ENCODE measurements at regions of chr11 and their contacts with region 1.

Region 1: DNA sequence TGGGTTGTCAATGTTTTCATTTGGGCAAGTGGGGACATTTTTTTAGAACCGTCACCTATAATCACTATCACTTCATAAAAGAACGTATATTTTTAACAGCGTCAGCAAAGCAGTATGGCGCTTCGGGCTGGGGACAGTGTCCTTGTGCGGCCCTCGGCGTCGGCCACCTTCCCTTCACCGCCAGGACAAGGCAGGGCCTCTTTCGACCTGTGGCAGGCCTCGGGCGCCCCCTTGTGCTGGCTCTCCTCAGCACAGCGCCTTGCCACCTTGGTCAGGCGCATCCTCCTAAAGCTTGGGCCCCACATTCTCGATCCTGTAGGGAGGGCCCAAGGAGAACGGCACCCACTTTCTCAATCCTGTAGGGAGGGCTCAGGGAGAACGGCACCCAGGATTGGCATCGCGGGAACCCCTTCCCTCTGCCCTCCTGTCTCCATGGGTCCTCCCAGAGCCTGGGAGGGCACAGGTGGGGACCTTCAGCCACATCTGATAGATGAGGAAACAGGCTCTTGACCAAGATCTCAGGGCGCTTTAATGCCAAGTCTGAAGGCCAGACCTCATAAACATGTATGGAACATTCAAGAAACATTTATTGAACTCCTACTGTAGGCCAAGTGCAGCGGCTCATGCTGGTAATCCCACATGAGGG is 11.5 kb upstream of the FADD start:
- DNase-seq: peak; percentile 79
- H3K4me3 ChIP-seq: no peak overlapping the region
- H3K27ac ChIP-seq: no peak overlapping the region
- H3K4me1 ChIP-seq: no peaks in the 10 kb centered on the region
- H3K27me3 ChIP-seq: no peaks in the 10 kb centered on the region
- CTCF ChIP-seq: peak; percentile 77 to 87 (median 85)
- EP300 ChIP-seq: no peak
- POLR2A ChIP-seq: no peak

Region 2: GRCh38 chr11:69683764-69684333 is 507.8 kb before region 1 on chr11:
- in situ Hi-C with region 1: loop called in 3 of 4 experiments (anchors 10 to 25 kb)
- intact Hi-C with region 1: no loop called
- DNase-seq: peak; percentile 27
- H3K4me3 ChIP-seq: no peak overlapping the region
- H3K27ac ChIP-seq: no peak overlapping the region
- H3K4me1 ChIP-seq: peaks cover 0 to 5% (median 2%) of the 10 kb centered on the region in 4 donors
- H3K27me3 ChIP-seq: peaks cover 9% of the 10 kb centered on the region
- CTCF ChIP-seq: peak in 4 of 5 experiments; percentile 29 to 55 (median 36)
- EP300 ChIP-seq: no peak
- POLR2A ChIP-seq: no peak

Region 3: GRCh38 chr11:69691449-69691848 is 500.2 kb before region 1 on chr11:
- in situ Hi-C with region 1: loop called in 3 of 4 experiments (anchors 10 to 25 kb)
- intact Hi-C with region 1: loop called (anchors 5 kb)
- DNase-seq: no peak
- H3K4me3 ChIP-seq: no peak overlapping the region
- H3K27ac ChIP-seq: no peak overlapping the region
- H3K4me1 ChIP-seq: no peaks in the 10 kb centered on the region
- H3K27me3 ChIP-seq: peaks cover 40% of the 10 kb centered on the region
- CTCF ChIP-seq: no peak
- EP300 ChIP-seq: no peak
- POLR2A ChIP-seq: no peak

Region 4: DNA sequence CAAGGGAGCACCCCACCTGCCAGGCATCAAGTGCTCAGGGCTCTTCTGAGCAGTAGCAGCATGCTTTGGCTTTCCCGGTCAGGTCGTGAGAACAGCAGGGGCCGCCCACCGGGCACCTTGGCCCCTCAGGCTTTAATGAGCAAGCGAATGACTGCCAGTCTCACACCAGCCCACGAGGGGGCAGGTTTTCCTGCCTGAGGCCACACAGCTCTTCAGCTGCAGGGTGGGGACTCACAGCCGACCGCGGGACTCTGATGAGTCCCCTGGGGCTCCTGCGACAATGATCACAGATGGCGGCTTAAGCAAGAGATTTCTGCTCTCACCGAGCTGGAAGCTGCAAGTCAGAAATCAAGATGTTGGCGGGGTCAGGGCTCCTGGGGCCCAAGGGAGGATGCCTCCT is 473.5 kb before region 1 on chr11:
- in situ Hi-C with region 1: loop called in 1 of 4 experiments (anchors 25 kb)
- intact Hi-C with region 1: no loop called
- DNase-seq: no peak
- H3K4me3 ChIP-seq: no peak overlapping the region
- H3K27ac ChIP-seq: no peak overlapping the region
- H3K4me1 ChIP-seq: no peaks in the 10 kb centered on the region
- H3K27me3 ChIP-seq: peaks cover 70% of the 10 kb centered on the region
- CTCF ChIP-seq: peak in 3 of 5 experiments; percentile 10 to 26 (median 17)
- EP300 ChIP-seq: no peak
- POLR2A ChIP-seq: no peak

Region 5: DNA sequence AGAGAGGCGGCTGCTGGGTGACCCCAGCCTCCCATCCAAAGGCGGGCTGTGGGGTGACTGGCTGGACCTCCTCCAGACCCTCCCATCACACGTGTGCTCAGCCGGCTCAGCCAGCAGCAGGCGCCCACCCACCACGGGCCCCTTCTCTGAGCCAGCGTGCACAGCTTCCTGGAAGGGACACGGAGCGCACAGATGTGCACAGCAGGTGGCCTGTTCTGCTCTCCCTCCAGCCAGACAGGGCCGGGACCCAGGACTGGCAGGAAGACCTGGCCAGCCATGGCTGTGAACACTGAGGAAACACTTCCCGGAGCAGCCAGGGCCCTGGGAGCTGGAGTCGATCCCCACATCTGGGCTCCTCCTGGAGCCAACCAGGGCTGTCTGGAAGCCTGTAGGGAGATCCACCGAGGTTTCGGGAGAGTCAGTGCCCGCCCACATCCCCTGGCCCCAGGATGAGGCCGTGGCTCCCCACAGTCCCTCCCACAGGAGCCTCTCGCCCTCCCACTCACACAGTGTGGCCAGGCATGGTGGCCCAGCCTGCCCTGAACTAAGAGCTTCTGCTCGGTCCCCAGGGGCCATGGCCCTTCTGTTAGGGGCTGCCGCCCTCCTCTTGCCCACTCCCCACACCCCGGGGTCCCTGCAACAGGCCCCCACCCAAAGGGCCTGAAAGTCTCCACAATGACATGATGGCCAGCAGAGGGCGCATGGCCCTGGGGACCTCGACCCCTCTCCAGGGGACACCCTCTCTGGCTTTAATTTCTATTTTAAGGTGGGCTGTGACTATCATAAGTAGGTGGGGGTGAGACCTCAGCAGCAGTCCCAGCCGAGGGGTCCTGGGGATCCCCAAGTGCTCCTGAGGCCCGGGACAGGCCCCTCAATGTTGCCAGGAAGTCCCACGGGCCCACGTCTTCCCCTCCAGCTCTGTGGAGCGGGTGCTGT is 281.8 kb before region 1 on chr11:
- in situ Hi-C with region 1: loop called in 2 of 4 experiments (anchors 5 kb)
- intact Hi-C with region 1: no loop called
- DNase-seq: no peak
- H3K4me3 ChIP-seq: no peak overlapping the region
- H3K27ac ChIP-seq: no peak overlapping the region
- H3K4me1 ChIP-seq: peaks cover 0 to 21% (median 9%) of the 10 kb centered on the region in 4 donors
- H3K27me3 ChIP-seq: peaks cover 24% of the 10 kb centered on the region
- CTCF ChIP-seq: peak in 4 of 5 experiments; percentile 29 to 60 (median 44)
- EP300 ChIP-seq: no peak
- POLR2A ChIP-seq: no peak

Region 6: DNA sequence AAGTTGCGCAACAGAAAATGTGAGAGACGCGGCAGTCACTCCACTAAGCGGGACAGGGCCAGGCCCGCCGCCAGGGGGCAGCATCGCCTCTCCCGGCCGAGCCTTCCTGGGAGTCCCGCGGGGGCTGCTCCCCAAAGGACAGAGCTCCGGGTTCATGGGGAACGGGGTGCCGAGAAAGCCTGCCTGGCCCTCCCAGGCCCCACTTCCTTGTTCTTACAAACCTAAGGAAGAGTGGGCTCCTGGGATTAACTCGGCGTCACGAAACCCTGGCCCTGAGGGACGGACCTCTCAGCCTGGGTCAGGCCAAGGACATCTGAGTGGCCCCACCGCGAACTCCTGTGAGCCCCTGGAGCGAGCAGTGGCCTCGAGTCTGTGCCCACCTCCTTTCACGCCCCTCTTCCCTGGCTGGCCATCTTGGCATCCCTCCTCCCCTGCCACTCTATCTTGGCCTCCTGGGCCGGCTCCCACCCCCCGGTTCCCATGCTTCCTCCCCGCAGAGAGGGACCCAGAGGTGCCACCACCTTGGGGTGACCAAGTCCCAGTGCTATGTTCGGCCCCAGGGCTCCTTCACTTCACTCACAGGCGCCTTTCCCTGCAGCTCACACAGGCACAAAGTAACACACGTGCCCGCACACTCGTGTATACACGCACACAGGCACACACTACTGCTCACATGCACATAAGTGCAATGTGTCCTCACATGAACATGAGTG is 272.5 kb before region 1 on chr11:
- in situ Hi-C with region 1: loop called (anchors 5 to 10 kb)
- intact Hi-C with region 1: loop called (anchors 2 kb)
- DNase-seq: peak; percentile 70
- H3K4me3 ChIP-seq: no peak overlapping the region
- H3K27ac ChIP-seq: no peak overlapping the region
- H3K4me1 ChIP-seq: peaks cover 0 to 22% (median 13%) of the 10 kb centered on the region in 4 donors
- H3K27me3 ChIP-seq: peaks cover 42% of the 10 kb centered on the region
- CTCF ChIP-seq: peak; percentile 85 to 91 (median 87)
- EP300 ChIP-seq: no peak
- POLR2A ChIP-seq: no peak

Measured in transverse colon (tissue), 4 donors.